ENCODE measurements at regions of chr5 and their contacts with region 1.

Region 1: DNA sequence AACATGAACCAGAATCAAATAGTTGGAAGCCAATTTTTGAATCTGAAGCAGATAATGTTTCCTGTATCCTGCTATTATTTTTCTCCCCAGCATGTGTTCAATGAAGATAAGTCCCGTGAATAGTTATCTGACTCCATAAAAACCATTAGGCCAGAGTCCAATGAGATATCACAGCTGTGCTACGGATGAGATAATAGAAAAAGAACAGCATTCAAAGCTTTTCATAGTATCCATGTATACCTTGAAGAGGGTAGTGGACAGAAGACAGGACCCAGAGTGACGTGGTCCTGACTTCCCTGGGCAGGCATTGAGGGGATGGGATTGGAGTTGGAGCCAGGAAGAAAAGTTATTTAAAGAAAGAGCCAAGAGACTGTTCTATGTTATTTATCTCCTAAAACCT is 50.7 kb upstream of the C6 start:
- DNase-seq: no peak
- ATAC-seq: peak; percentile 47
- H3K4me3 ChIP-seq: no peak overlapping the region
- H3K27ac ChIP-seq: peak overlapping the region in 1 of 4 donors; percentile 0
- H3K4me1 ChIP-seq: no peaks in the 10 kb centered on the region
- H3K27me3 ChIP-seq: no peaks in the 10 kb centered on the region
- CTCF ChIP-seq: no peak
- POLR2A ChIP-seq: no peak

Region 2: GRCh38 chr5:41392016-41392415 is 128.0 kb after region 1 on chr5:
- intact Hi-C with region 1: no loop called
- DNase-seq: no peak
- ATAC-seq: no peak
- H3K4me3 ChIP-seq: no peak overlapping the region
- H3K27ac ChIP-seq: no peak overlapping the region
- H3K4me1 ChIP-seq: no peaks in the 10 kb centered on the region
- H3K27me3 ChIP-seq: no peaks in the 10 kb centered on the region
- CTCF ChIP-seq: no peak
- POLR2A ChIP-seq: no peak

Region 3: GRCh38 chr5:41843456-41844370 is 579.7 kb after region 1 on chr5:
- intact Hi-C with region 1: loop called (anchors 10 kb)
- DNase-seq: peak; percentile 19 to 51 (median 30)
- ATAC-seq: peak; percentile 74
- H3K4me3 ChIP-seq: no peak overlapping the region
- H3K27ac ChIP-seq: no peak overlapping the region
- H3K4me1 ChIP-seq: peaks cover 4% of the 10 kb centered on the region
- H3K27me3 ChIP-seq: no peaks in the 10 kb centered on the region
- CTCF ChIP-seq: peak; percentile 51 to 77 (median 68)
- POLR2A ChIP-seq: no peak

Measured in body of pancreas (tissue), 4 donors.